H1 (cell line): ENCODE measurements at regions of chr2 and their contacts with region 1.

Region 1: DNA sequence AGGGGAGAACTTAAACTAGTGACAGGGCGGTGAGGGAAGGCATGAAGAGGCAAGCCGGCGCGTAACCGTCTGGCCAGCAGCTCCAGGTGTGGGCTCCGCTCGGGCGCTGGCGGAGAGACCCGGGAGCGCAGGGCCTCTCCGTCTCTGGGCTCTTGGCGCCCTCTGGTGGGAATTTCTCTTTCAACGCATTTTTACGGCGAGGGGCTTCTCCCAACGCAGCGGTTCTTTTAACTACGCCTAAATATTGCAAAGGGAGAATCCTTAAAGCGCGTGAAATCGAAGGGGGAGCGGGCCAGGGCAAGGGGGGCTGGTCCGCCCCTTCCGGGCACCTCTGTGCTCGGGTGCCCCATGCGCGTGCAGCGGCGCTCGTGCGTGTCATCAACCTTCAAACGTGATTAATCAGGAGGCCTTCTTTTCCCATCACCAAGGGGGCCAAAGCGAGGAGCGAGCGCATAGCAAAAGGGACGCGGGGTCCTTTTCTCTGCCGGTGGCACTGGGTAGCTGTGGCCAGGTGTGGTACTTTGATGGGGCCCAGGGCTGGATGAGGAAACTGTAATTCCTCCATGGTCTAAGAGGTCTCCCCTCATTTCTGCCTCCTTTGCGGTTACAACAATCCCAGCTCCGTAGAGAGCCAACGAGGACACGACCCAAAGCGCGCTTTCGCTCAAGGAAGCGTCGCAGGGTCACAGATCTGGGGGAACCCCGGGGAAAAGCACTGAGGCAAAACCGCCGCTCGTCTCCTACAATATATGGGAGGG is 762 bp upstream of the GAD1 start:
- DNase-seq: peak in 1 of 2 experiments; percentile 92
- H3K4me3 ChIP-seq: peak overlapping the region; percentile 39 to 70 (median 52); a peak in 7 of 8 replicates
- H3K27ac ChIP-seq: no peak overlapping the region
- H3K4me1 ChIP-seq: peaks cover 3 to 52% (median 24%) of the 10 kb centered on the region in 4 experiments
- H3K27me3 ChIP-seq: peaks cover 61 to 82% (median 79%) of the 10 kb centered on the region in 4 experiments
- CTCF ChIP-seq: peak in 2 of 3 experiments; percentile 74 to 99; a peak in 3 of 4 replicates
- EP300 ChIP-seq: no peak
- POLR2A ChIP-seq: no peak
- RAD21 ChIP-seq: peak; percentile 93 to 96

Region 2: GRCh38 chr2:170235860-170236679 is 579.9 kb before region 1 on chr2:
- CTCF ChIA-PET with region 1: interaction called, 16 read pairs
- POLR2A ChIA-PET with region 1: no interaction called
- DNase-seq: peak in 1 of 2 experiments; percentile 55
- H3K4me3 ChIP-seq: no peak overlapping the region
- H3K27ac ChIP-seq: no peak overlapping the region
- H3K4me1 ChIP-seq: peaks cover 0 to 4% (median 1%) of the 10 kb centered on the region in 4 experiments; a peak in 2 of 7 replicates
- H3K27me3 ChIP-seq: no peaks in the 10 kb centered on the region
- CTCF ChIP-seq: peak in 2 of 3 experiments; percentile 69 to 72; a peak in 3 of 4 replicates
- EP300 ChIP-seq: no peak
- POLR2A ChIP-seq: no peak
- RAD21 ChIP-seq: peak; percentile 86 to 94

Region 3: GRCh38 chr2:170361090-170361936 is 454.6 kb before region 1 on chr2:
- CTCF ChIA-PET with region 1: interaction called, 68 read pairs
- POLR2A ChIA-PET with region 1: no interaction called
- DNase-seq: peak; percentile 21 to 69
- H3K4me3 ChIP-seq: no peak overlapping the region
- H3K27ac ChIP-seq: no peak overlapping the region
- H3K4me1 ChIP-seq: peaks cover 0 to 7% (median 2%) of the 10 kb centered on the region in 4 experiments; a peak in 3 of 7 replicates
- H3K27me3 ChIP-seq: no peaks in the 10 kb centered on the region
- CTCF ChIP-seq: peak; percentile 32 to 85 (median 72)
- EP300 ChIP-seq: no peak
- POLR2A ChIP-seq: no peak
- RAD21 ChIP-seq: peak; percentile 74 to 84

Region 4: DNA sequence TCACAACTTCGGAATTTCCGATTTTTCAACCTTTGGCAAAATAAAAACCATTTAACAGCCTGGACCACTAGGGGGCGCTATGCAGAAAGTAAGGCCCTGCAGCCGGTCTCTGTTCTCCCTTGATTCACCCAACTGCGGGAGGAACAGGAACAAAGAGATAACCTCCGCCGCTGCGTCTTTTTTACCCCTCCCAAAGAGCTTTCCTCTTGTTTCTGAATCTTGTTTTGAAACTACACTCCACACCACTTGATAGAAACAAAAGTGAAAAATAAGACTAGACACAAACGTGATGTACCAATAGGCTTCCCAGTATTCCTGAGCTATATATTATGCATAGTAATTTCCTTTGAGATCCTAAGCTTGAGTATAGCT is 406.8 kb before region 1 on chr2:
- CTCF ChIA-PET with region 1: interaction called, 32 read pairs
- POLR2A ChIA-PET with region 1: no interaction called
- DNase-seq: peak; percentile 19 to 86
- H3K4me3 ChIP-seq: peak overlapping the region in 1 of 4 experiments; percentile 16; a peak in 1 of 8 replicates
- H3K27ac ChIP-seq: no peak overlapping the region
- H3K4me1 ChIP-seq: no peaks in the 10 kb centered on the region
- H3K27me3 ChIP-seq: no peaks in the 10 kb centered on the region
- CTCF ChIP-seq: peak; percentile 47 to 75 (median 69)
- EP300 ChIP-seq: no peak
- POLR2A ChIP-seq: no peak
- RAD21 ChIP-seq: peak; percentile 73 to 80

Region 5: GRCh38 chr2:170485254-170486026 is 330.5 kb before region 1 on chr2:
- CTCF ChIA-PET with region 1: no interaction called
- POLR2A ChIA-PET with region 1: no interaction called
- DNase-seq: no peak
- H3K4me3 ChIP-seq: no peak overlapping the region
- H3K27ac ChIP-seq: no peak overlapping the region
- H3K4me1 ChIP-seq: no peaks in the 10 kb centered on the region
- H3K27me3 ChIP-seq: no peaks in the 10 kb centered on the region
- CTCF ChIP-seq: no peak
- EP300 ChIP-seq: no peak
- POLR2A ChIP-seq: no peak
- RAD21 ChIP-seq: no peak

Region 6: GRCh38 chr2:170739048-170739447 is 76.9 kb before region 1 on chr2:
- CTCF ChIA-PET with region 1: interaction called, 14 read pairs
- POLR2A ChIA-PET with region 1: no interaction called
- DNase-seq: no peak
- H3K4me3 ChIP-seq: no peak overlapping the region
- H3K27ac ChIP-seq: no peak overlapping the region
- H3K4me1 ChIP-seq: no peaks in the 10 kb centered on the region
- H3K27me3 ChIP-seq: no peaks in the 10 kb centered on the region
- CTCF ChIP-seq: no peak
- EP300 ChIP-seq: no peak
- POLR2A ChIP-seq: no peak
- RAD21 ChIP-seq: no peak

Region 7: DNA sequence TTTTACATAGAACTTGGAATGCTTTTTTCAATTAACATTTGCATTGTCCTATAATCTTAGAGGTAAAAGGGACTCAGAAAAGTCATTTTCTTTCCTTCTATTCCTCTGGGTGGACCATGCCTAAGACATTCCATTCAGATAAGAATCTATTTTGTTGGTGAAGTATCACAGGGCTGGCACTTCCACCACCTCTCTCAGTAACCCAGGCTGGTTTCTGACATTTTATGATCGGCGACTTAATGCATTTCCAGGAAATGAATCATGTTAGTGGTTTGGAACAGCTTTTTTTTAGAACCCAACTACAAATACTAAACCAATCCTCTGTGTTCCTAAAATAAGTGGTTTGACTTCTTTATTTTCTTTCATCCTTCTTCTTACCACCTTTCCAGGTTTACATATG is 27.7 kb after region 1 on chr2:
- CTCF ChIA-PET with region 1: interaction called, 11 read pairs
- POLR2A ChIA-PET with region 1: interaction called, 5 read pairs
- DNase-seq: no peak
- H3K4me3 ChIP-seq: no peak overlapping the region
- H3K27ac ChIP-seq: no peak overlapping the region
- H3K4me1 ChIP-seq: no peaks in the 10 kb centered on the region
- H3K27me3 ChIP-seq: peaks cover 0 to 2% (median 0%) of the 10 kb centered on the region in 4 experiments; a peak in 1 of 7 replicates
- CTCF ChIP-seq: no peak
- EP300 ChIP-seq: no peak
- POLR2A ChIP-seq: no peak
- RAD21 ChIP-seq: no peak